GM10248 (cell line): ENCODE measurements at regions of chr20 and their contacts with region 1.

Region 1: DNA sequence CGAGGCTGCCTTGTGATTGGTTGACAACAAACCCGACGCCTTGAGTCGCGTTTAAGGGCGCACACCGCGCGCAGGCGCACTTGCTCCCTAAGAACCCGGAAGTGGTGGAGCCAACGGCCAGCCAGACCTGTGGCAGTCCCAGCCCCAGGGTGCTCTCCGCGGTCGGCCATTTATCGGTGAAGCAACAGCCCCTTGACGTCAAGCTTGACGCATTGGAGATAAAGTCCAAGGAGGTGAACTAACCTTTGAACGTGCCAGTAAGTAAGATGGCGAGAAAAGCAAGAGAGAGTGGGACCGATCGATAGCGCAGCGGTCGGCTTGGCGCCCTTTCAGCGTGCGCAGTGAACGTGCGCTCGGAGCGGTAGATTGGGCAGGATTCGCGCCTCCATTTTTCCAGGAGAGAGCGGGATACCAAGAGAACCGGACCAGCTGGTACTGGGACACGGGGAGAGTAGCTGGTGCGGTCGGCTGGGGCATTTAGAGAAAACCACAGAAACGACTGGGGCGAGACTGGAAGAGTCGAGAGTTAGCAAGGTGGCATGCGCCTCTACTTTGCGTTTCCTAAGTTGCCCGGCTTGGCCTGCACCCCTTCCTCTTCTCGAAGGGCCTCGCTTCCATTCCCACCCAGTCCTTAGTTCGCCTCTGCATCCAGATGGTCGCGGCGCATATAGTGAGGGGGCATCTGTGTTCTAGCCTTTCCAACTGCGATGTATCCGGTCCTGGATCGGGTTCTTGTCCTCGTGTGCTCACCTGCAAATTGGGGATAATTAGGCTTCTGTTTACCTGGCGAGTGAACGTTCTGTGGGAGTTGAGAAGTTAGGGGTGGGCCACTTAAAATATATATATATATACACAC is at the start of gene CSTF1:
- DNase-seq: peak; percentile 100
- CTCF ChIP-seq: no peak

Region 2: GRCh38 chr20:56411759-56412472 is 19.4 kb after region 1 on chr20 and contains the start of gene CASS4:
- CTCF ChIA-PET with region 1: interaction called, 15 read pairs
- POLR2A ChIA-PET with region 1: no interaction called
- DNase-seq: peak; percentile 41
- CTCF ChIP-seq: no peak

Region 3: GRCh38 chr20:56427797-56428196 is 35.3 kb after region 1 on chr20:
- CTCF ChIA-PET with region 1: interaction called, 10 read pairs
- POLR2A ChIA-PET with region 1: no interaction called
- DNase-seq: no peak
- CTCF ChIP-seq: no peak

Region 4: DNA sequence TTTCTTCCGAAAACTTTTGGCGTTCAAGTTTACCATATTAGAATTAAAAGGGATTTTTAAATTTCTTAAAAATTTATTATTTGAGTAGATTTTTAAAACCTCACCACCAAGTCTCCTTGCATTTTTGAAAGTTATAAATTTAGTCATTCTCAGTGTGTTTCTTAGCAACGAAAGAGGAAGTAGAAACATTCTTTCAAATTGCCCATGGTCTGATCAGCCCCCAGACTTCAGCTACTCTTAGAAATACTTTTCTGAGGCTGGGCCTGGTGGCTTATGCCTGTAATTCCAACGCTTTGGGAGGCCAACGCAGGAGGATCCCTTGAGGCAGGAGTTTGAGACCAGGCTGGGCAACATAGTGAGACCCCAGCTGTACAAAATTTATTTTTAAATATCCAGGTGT is 60.8 kb after region 1 on chr20:
- CTCF ChIA-PET with region 1: no interaction called
- POLR2A ChIA-PET with region 1: no interaction called
- DNase-seq: peak; percentile 70
- CTCF ChIP-seq: no peak